ENCODE measurements at regions of chr1 and their contacts with region 1.

Region 1: GRCh38 chr1:170929835-170930554 is 5.3 kb upstream of the MROH9 start:
- DNase-seq: peak; percentile 20
- ATAC-seq: peak; percentile 84
- H3K4me3 Mint-ChIP-seq: no peak overlapping the region
- H3K27ac Mint-ChIP-seq: no peak overlapping the region
- H3K4me1 Mint-ChIP-seq: no peaks in the 10 kb centered on the region
- H3K27me3 Mint-ChIP-seq: peaks cover 9% of the 10 kb centered on the region
- CTCF ChIP-seq: peak; percentile 70

Region 2: GRCh38 chr1:170687621-170688020 is 242.4 kb before region 1 on chr1:
- CTCF ChIA-PET with region 1: interaction called, 20 read pairs
- POLR2A ChIA-PET with region 1: no interaction called
- intact Hi-C with region 1: loop called (anchors 10 kb)
- DNase-seq: no peak
- ATAC-seq: no peak
- H3K4me3 Mint-ChIP-seq: no peak overlapping the region
- H3K27ac Mint-ChIP-seq: no peak overlapping the region
- H3K4me1 Mint-ChIP-seq: no peaks in the 10 kb centered on the region
- H3K27me3 Mint-ChIP-seq: peaks cover 29% of the 10 kb centered on the region
- CTCF ChIP-seq: no peak

Region 3: DNA sequence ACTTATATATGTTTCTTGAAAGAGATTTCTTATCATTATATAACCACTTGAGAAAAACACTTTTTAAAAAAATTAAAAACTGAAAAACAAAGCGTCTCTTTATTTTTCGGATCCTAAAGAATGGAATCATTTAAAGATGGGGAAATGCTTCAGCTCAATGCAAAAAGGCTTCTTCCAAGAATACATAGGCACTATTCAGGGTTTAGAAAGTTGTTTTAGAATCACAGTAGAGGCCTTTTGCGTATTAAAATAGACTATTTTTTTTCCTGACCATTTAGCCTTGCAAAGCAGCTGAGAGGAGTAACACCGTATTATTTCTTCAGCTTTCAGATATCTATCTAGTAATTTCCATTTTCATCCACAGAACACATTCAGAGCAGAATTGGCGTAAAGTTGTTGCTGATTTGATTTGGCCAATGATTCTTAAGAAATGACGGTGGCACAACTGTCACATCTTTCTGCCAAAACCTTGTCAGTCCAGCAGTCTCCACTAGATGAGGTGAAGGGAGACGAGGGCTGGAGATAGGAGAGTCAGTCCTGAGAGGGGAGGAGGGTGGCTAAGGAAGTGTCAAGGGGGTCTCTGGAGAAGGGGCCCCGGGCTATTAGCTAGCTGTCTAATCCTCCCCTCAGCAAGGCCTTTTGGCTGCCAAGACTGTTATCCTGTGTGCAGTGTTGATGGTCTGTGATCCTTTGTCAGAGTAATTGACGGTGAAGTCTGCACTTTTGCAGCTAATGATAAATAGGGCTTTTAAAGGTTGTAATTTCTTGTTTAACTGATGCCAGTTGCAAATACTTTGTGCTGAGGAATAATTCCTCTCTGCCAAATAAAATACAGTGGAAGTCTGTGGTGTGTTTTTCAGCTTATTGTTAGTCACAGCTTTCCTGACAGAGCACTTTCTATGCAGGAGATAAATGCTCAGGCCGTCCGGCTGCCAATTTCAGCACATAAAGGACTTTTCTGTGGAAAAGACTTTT is 231.4 kb before region 1 on chr1:
- CTCF ChIA-PET with region 1: interaction called, 3 read pairs
- POLR2A ChIA-PET with region 1: no interaction called
- intact Hi-C with region 1: loop called (anchors 10 kb)
- DNase-seq: no peak
- ATAC-seq: no peak
- H3K4me3 Mint-ChIP-seq: no peak overlapping the region
- H3K27ac Mint-ChIP-seq: no peak overlapping the region
- H3K4me1 Mint-ChIP-seq: no peaks in the 10 kb centered on the region
- H3K27me3 Mint-ChIP-seq: peaks cover 11% of the 10 kb centered on the region
- CTCF ChIP-seq: no peak

Measured in activated CD8-positive, alpha-beta T cell treated with anti-CD3 and anti-CD28 coated beads for 36 hours (primary cell).